Right ventricle myocardium inferior (tissue), 1 donor: ENCODE measurements at regions of chr7 and their contacts with region 1.

Region 1: DNA sequence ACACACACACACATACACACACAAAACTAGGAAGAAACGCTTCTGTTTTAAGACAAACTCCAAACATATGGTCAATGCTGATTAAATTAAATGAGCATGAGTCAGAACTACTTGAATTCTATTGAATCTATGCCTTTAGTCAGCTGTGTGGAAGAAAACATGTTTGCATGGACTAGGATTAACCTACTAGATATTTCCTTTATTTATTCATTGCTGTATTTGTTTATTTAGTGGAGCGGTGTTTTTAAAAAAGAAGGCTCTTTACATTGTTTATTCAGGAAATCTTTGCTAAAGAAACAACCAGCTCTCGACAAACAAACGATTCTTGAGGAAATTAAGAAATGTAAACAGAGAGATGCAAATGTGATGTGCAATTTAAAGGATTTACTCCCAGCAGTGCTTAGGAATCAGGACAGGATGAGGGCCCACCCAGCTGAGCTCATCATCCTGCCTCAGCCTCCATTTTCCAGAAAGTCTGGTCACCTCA is 83.2 kb downstream of the PDE1C start:
- DNase-seq: no peak
- ATAC-seq: no peak

Region 2: GRCh38 chr7:32018845-32019578 is 32.0 kb after region 1 on chr7:
- intact Hi-C with region 1: loop called (anchors 5 kb)
- DNase-seq: no peak
- ATAC-seq: no peak

Region 3: DNA sequence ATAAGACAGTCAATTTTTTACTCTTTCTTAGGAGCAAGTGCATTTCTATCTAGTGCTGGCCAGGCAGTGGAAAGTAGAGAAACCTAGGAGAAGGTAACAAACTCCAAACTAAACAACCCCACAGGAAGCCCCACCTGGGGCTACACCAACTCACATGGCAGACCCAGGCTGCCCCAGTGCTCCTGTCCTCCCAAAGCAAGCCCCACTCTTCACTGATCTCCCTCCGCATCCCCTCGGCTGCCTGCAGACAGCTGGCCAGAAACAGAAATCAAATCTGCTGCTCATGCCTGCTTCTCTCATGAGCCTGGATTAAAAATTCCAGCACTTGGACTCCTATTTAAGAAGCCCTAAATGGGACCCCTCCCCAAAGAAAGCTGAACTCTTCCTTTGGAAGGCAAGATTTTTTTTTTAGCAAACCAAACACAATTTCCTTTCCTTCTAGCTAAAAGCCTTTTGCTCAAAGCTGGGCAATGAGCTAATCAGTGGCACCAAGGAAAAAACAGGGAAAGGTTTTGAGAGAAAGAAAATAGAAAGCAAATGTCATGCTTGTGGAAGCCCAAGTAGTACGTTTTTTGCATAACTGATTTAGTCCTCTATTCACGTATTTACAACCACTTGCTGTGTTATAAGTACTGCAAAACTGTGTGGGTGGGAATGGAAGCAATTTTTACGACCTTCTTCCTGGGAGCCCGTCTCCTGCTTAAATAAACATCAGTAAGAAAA is 72.5 kb after region 1 on chr7:
- intact Hi-C with region 1: loop called (anchors 5 kb)
- DNase-seq: no peak
- ATAC-seq: no peak